Heart right ventricle (tissue), 16 donors: ENCODE measurements at regions of chr10 and their contacts with region 1.

Region 1: DNA sequence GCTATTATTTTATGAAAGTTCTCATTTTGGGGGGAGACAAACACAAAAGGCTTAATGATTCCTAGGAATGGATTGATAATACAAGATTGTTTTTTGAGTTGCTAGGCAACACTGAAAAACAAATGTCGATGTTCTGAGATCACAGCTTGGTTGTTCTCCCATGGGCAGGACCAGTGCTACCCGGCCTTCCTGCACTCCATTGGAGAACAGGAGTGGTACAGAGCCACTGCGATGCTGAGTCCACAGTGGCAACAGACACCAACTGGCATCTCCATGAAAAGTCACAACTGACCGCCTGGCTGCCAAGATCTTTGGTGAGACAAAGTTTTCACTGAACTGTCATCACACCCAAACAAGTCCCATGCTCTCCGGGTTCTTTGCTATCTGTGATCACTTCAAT is 68.9 kb upstream of the NMT2 start:
- DNase-seq: peak in 1 of 2 donors; percentile 15
- ATAC-seq: peak in 7 of 8 donors; percentile 79 to 89 (median 84)
- H3K4me3 ChIP-seq: no peak overlapping the region
- H3K27ac ChIP-seq: peak overlapping the region in 6 of 10 donors; percentile 3 to 36 (median 26)
- H3K4me1 ChIP-seq: peaks cover 0 to 22% (median 4%) of the 10 kb centered on the region in 9 donors
- H3K27me3 ChIP-seq: no peaks in the 10 kb centered on the region
- CTCF ChIP-seq: no peak

Region 2: GRCh38 chr10:15189133-15189885 is 48.0 kb before region 1 on chr10:
- intact Hi-C with region 1: no loop called
- DNase-seq: no peak
- ATAC-seq: no peak
- H3K4me3 ChIP-seq: no peak overlapping the region
- H3K27ac ChIP-seq: no peak overlapping the region
- H3K4me1 ChIP-seq: peaks cover 0 to 7% (median 0%) of the 10 kb centered on the region in 9 donors
- H3K27me3 ChIP-seq: peaks cover 0 to 5% (median 0%) of the 10 kb centered on the region in 7 donors
- CTCF ChIP-seq: no peak

Region 3: GRCh38 chr10:17001961-17002749 is 1764.8 kb after region 1 on chr10:
- intact Hi-C with region 1: loop called in 1 of 10 experiments (anchors 5 kb)
- DNase-seq: peak; percentile 29 to 74
- ATAC-seq: peak; percentile 63 to 84 (median 80)
- H3K4me3 ChIP-seq: no peak overlapping the region
- H3K27ac ChIP-seq: peak overlapping the region; percentile 19 to 82 (median 72)
- H3K4me1 ChIP-seq: peaks cover 2 to 53% (median 22%) of the 10 kb centered on the region in 9 donors
- H3K27me3 ChIP-seq: no peaks in the 10 kb centered on the region
- CTCF ChIP-seq: no peak